Esophagus squamous epithelium (tissue), 5 donors: ENCODE measurements at regions of chr14 and their contacts with region 1.

Region 1: GRCh38 chr14:95361373-95362137 is 41.8 kb upstream of the CLMN start:
- DNase-seq: no peak
- H3K4me3 ChIP-seq: peak overlapping the region in 1 of 4 donors; percentile 34
- H3K27ac ChIP-seq: no peak overlapping the region
- H3K4me1 ChIP-seq: peaks cover 0 to 16% (median 6%) of the 10 kb centered on the region in 3 donors
- H3K27me3 ChIP-seq: peaks cover 0 to 48% (median 0%) of the 10 kb centered on the region in 4 donors
- CTCF ChIP-seq: peak in 5 of 6 experiments; percentile 41 to 69 (median 58)
- POLR2A ChIP-seq: no peak

Region 2: DNA sequence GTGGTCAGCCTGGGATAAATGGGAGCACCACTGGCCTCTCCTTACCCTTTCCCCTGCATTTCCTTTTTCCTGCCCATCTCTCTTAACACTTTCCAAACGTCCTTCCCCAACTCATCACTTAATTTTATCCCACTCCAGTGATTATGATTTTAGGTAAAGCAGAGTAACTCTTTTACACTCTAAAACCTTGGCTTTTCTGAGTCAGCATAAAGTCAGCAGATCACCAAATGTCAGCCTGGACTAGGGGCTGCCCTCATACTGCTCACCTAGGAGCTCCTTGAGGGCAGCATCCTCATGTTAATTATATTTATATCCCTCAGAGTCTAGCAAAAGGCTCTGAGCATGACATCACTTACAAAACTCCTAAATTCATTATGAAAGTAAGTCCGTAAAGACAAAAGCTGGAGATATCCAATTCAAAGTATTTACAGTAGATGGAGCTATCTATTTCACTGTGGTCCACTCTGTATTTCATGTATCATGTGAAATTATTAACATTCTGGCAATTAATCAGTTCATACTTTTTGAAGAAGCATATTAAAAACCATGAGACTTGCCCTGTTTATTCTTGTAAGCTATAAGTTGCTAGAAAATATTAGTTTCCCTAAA is 187.3 kb before region 1 on chr14:
- intact Hi-C with region 1: loop called (anchors 10 kb)
- DNase-seq: no peak
- H3K4me3 ChIP-seq: no peak overlapping the region
- H3K27ac ChIP-seq: no peak overlapping the region
- H3K4me1 ChIP-seq: peaks cover 0 to 3% (median 0%) of the 10 kb centered on the region in 3 donors
- H3K27me3 ChIP-seq: no peaks in the 10 kb centered on the region
- CTCF ChIP-seq: peak in 3 of 6 experiments; percentile 20 to 43 (median 24)
- POLR2A ChIP-seq: no peak